ENCODE measurements at regions of chr19 and their contacts with region 1.

Region 1: GRCh38 chr19:55624109-55625003 is at the start of gene ZNF784:
- DNase-seq: peak; percentile 87 to 97 (median 95)
- ATAC-seq: peak; percentile 60
- H3K4me3 Mint-ChIP-seq: peak within 1 kb of the TSS; percentile 85 to 97 (median 89)
- H3K27ac Mint-ChIP-seq: peak within 1 kb of the TSS; percentile 81 to 99 (median 98)
- H3K4me1 Mint-ChIP-seq: peaks cover 26 to 65% (median 56%) of the 10 kb centered on the region in 4 donors
- H3K27me3 Mint-ChIP-seq: no peaks in the 10 kb centered on the region
- polyA plus RNA-seq, gene ZNF784: 0.64 to 1.4 (median 1.1) TPM

Region 2: DNA sequence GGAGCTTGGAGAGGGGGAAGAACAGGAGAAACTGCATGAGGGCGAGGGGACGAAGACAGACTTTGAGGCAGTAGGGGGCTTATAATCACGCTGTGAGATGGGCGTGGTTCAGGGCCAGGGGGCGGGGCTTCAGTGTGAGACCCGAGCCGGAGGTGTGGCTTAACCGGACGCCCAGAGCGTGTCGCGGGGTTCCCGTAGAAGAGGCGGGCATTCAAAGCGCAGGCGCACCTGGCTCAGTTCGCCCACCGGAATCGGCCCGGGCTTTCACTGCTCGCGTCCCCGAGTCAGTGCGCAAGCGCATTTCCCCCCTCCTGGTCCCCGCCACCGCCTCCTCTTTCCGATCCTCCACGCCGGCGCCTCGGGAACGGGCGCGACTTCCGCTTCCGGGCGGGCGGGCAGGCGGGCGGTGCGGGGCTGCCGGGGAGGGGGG is 19.1 kb before region 1 on chr19:
- POLR2A ChIA-PET with region 1: interaction called, 55 read pairs
- DNase-seq: peak; percentile 95 to 99 (median 97)
- ATAC-seq: peak; percentile 77 to 79
- H3K4me3 Mint-ChIP-seq: peak overlapping the region; percentile 78 to 93 (median 89)
- H3K27ac Mint-ChIP-seq: peak overlapping the region; percentile 78 to 98 (median 94)
- H3K4me1 Mint-ChIP-seq: peaks cover 37 to 64% (median 61%) of the 10 kb centered on the region in 4 donors
- H3K27me3 Mint-ChIP-seq: no peaks in the 10 kb centered on the region

Region 3: DNA sequence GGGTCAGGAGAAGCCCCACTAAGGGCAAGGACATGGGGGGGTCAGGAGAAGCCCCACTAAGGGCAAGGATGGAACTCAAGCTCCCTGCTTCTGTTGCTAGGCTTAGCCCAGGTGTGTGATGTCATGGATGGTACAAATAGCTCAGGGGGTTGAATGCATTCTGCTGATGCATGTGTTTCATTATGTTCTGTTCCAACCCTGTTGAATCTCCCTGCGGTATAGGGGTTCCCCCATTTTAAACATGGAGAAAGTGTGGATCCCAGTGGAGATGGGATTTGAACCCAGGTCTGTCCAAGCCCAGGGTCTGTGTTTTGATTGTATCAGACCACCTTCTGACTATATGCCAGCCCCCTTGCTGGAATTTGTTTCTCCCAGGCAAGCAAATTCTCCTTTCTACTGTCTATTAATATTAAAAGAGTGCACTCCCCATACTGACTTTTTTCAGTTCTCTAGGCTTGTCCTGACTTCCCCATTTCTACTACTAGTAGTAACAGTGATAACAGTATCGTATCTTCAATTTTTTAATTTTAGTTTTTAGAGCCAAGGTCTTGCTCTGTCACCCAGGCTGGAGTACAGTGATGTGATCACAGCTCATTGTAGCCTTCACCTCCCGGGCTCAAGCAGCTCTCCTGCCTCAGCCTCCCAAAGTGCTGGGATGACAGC is 12.2 kb before region 1 on chr19:
- POLR2A ChIA-PET with region 1: interaction called, 55 read pairs
- DNase-seq: no peak
- ATAC-seq: no peak
- H3K4me3 Mint-ChIP-seq: no peak overlapping the region
- H3K27ac Mint-ChIP-seq: peak overlapping the region in 8 of 10 donors; percentile 13 to 84 (median 54)
- H3K4me1 Mint-ChIP-seq: peaks cover 21 to 55% (median 47%) of the 10 kb centered on the region in 4 donors
- H3K27me3 Mint-ChIP-seq: no peaks in the 10 kb centered on the region

Region 4: DNA sequence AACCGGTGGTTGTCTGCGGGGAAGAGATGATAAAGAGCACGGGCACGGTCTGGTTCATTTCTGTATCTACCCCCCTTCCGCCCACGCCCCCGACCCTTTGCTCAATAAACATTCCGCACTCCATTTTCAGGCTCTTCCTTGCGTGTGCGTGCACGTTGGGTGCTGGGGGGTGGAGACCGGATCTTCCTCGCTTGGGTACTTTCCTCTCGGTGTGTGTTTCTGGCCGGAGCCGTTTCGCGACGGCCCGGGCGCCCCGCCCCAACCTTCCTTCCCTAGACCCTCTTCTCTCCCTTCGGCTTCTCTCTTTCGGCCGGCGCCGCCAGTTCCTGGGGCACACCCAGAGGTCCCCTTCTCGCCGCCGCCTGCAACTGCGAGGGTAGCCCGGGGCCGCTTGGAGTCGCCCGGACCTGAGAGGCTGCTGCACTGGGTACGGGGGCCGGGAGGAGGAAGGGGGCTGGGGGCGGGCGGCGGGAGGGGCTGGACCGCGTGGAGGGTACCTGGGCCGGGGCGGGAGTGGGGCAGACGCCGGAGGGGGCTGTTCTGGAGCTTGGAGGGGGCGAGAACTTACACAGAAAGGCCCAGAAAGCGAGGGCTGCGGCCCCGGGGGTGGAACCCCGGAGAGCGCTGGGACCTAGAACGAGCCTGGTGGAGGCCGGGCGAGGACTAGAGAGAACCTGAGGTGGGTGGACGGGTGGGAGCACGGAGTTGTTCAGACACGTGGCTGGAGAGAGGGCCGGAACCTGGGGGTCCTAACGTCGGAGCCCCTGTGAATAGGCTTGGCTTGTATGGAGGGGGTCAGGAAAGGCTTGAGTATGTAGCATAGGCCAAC is 19.2 kb after region 1 on chr19 and contains the start of gene ZNF581:
- POLR2A ChIA-PET with region 1: interaction called, 76 read pairs
- DNase-seq: peak; percentile 67 to 86 (median 76)
- ATAC-seq: peak; percentile 45 to 51
- H3K4me3 Mint-ChIP-seq: peak within 1 kb of the TSS; percentile 91 to 99 (median 94)
- H3K27ac Mint-ChIP-seq: peak within 1 kb of the TSS; percentile 94 to 99 (median 98)
- H3K4me1 Mint-ChIP-seq: peaks cover 30 to 64% (median 60%) of the 10 kb centered on the region in 4 donors
- H3K27me3 Mint-ChIP-seq: no peaks in the 10 kb centered on the region
- polyA plus RNA-seq, gene ZNF581: 21.2 to 35.9 (median 34.9) TPM

Region 5: GRCh38 chr19:55653758-55654539 is 29.6 kb after region 1 on chr19:
- POLR2A ChIA-PET with region 1: interaction called, 13 read pairs
- DNase-seq: peak; percentile 99 to 100 (median 100)
- ATAC-seq: peak; percentile 80 to 81
- H3K4me3 Mint-ChIP-seq: peak overlapping the region; percentile 88 to 99 (median 97)
- H3K27ac Mint-ChIP-seq: peak overlapping the region; percentile 97 to 100 (median 99)
- H3K4me1 Mint-ChIP-seq: peaks cover 25 to 56% (median 54%) of the 10 kb centered on the region in 4 donors
- H3K27me3 Mint-ChIP-seq: no peaks in the 10 kb centered on the region

Measured in naive thymus-derived CD8-positive, alpha-beta T cell (primary cell).